OCI-LY7 (cell line): ENCODE measurements at regions of chr20 and their contacts with region 1.

Region 1: GRCh38 chr20:53869466-53870258 is 200.7 kb downstream of the BCAS1 start:
- DNase-seq: peak; percentile 93
- H3K4me3 ChIP-seq: peak overlapping the region; percentile 18
- H3K27ac ChIP-seq: peak overlapping the region; percentile 92
- H3K4me1 ChIP-seq: peaks cover 89% of the 10 kb centered on the region
- CTCF ChIP-seq: peak; percentile 98

Region 2: GRCh38 chr20:53738039-53738944 is 131.4 kb before region 1 on chr20:
- CTCF ChIA-PET with region 1: no interaction called
- POLR2A ChIA-PET with region 1: interaction called, 21 read pairs
- intact Hi-C with region 1: no loop called
- DNase-seq: peak; percentile 48
- H3K4me3 ChIP-seq: peak overlapping the region; percentile 56
- H3K27ac ChIP-seq: peak overlapping the region; percentile 11
- H3K4me1 ChIP-seq: peaks cover 65% of the 10 kb centered on the region
- CTCF ChIP-seq: no peak

Region 3: GRCh38 chr20:53839423-53840176 is 30.1 kb before region 1 on chr20:
- CTCF ChIA-PET with region 1: interaction called, 4 read pairs
- POLR2A ChIA-PET with region 1: interaction called, 139 read pairs
- intact Hi-C with region 1: loop called (anchors 2 kb)
- DNase-seq: peak; percentile 94
- H3K4me3 ChIP-seq: peak overlapping the region; percentile 43
- H3K27ac ChIP-seq: peak overlapping the region; percentile 76
- H3K4me1 ChIP-seq: peaks cover 91% of the 10 kb centered on the region
- CTCF ChIP-seq: no peak

Region 4: GRCh38 chr20:53891306-53891944 is 21.8 kb after region 1 on chr20:
- CTCF ChIA-PET with region 1: no interaction called
- POLR2A ChIA-PET with region 1: interaction called, 27 read pairs
- intact Hi-C with region 1: loop called (anchors 1 kb)
- DNase-seq: no peak
- H3K4me3 ChIP-seq: no peak overlapping the region
- H3K27ac ChIP-seq: peak overlapping the region; percentile 63
- H3K4me1 ChIP-seq: peaks cover 70% of the 10 kb centered on the region
- CTCF ChIP-seq: no peak

Region 5: GRCh38 chr20:53915446-53916172 is 45.9 kb after region 1 on chr20:
- CTCF ChIA-PET with region 1: interaction called, 9 read pairs
- POLR2A ChIA-PET with region 1: interaction called, 38 read pairs
- intact Hi-C with region 1: loop called (anchors 1 kb)
- DNase-seq: peak; percentile 94
- H3K4me3 ChIP-seq: peak overlapping the region; percentile 69
- H3K27ac ChIP-seq: peak overlapping the region; percentile 69
- H3K4me1 ChIP-seq: peaks cover 73% of the 10 kb centered on the region
- CTCF ChIP-seq: peak; percentile 97

Region 6: DNA sequence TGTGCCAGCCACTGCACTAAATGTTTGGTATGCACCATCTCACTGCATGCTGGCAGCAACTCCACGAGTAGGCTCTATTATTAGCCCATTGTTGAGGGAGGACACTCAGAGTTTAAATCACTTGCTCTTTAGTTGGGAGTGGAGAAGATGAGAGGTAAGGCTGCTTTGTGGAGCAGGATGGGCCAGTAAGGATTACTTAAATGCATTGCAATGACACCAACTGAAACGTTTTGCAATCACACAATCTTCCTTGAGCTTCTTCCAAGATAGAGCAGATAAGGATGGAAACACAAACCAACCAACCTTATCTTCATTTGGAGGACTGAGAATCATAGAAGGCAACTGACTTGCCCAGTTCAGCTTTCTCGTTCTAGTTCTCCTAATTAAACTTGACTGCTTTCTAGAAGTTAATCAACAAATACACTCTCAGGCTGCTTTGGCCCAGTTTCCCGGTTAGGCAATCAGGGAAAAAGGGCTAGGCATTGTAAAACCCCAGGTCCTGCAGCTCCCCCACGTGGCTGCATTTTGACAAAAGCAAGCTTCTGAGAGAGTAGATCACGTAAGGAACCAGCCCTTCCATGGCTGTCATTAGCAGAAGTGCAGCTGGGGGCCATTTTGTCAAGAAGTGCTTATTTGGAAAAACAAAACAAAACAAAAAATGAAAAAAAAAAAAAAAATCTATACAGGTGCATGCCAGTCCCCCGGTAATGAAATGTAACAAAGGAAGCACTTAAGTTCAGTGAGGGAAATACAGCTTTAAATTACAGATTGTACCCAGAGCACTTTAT is 70.1 kb after region 1 on chr20:
- CTCF ChIA-PET with region 1: interaction called, 3 read pairs
- POLR2A ChIA-PET with region 1: interaction called, 15 read pairs
- intact Hi-C with region 1: loop called (anchors 1 kb)
- DNase-seq: peak; percentile 97
- H3K4me3 ChIP-seq: peak overlapping the region; percentile 62
- H3K27ac ChIP-seq: peak overlapping the region; percentile 71
- H3K4me1 ChIP-seq: peaks cover 79% of the 10 kb centered on the region
- CTCF ChIP-seq: peak; percentile 98